Endothelial cell of umbilical vein (primary cell): ENCODE measurements at regions of chr4 and their contacts with region 1.

Region 1: GRCh38 chr4:158850800-158851644 is 82.2 kb downstream of the FNIP2 start:
- DNase-seq: peak; percentile 66
- H3K4me3 ChIP-seq: no peak overlapping the region
- H3K27ac ChIP-seq: no peak overlapping the region
- H3K4me1 ChIP-seq: no peaks in the 10 kb centered on the region
- H3K27me3 ChIP-seq: no peaks in the 10 kb centered on the region
- CTCF ChIP-seq: peak; percentile 27 to 31
- POLR2A ChIP-seq: no peak

Region 2: GRCh38 chr4:158710814-158711213 is 140.2 kb before region 1 on chr4:
- CTCF ChIA-PET with region 1: interaction called, 18 read pairs
- POLR2A ChIA-PET with region 1: no interaction called
- dilution Hi-C with region 1: no loop called
- intact Hi-C with region 1: no loop called
- DNase-seq: peak; percentile 31
- H3K4me3 ChIP-seq: no peak overlapping the region
- H3K27ac ChIP-seq: no peak overlapping the region
- H3K4me1 ChIP-seq: no peaks in the 10 kb centered on the region
- H3K27me3 ChIP-seq: no peaks in the 10 kb centered on the region
- CTCF ChIP-seq: peak; percentile 12 to 17
- POLR2A ChIP-seq: no peak

Region 3: DNA sequence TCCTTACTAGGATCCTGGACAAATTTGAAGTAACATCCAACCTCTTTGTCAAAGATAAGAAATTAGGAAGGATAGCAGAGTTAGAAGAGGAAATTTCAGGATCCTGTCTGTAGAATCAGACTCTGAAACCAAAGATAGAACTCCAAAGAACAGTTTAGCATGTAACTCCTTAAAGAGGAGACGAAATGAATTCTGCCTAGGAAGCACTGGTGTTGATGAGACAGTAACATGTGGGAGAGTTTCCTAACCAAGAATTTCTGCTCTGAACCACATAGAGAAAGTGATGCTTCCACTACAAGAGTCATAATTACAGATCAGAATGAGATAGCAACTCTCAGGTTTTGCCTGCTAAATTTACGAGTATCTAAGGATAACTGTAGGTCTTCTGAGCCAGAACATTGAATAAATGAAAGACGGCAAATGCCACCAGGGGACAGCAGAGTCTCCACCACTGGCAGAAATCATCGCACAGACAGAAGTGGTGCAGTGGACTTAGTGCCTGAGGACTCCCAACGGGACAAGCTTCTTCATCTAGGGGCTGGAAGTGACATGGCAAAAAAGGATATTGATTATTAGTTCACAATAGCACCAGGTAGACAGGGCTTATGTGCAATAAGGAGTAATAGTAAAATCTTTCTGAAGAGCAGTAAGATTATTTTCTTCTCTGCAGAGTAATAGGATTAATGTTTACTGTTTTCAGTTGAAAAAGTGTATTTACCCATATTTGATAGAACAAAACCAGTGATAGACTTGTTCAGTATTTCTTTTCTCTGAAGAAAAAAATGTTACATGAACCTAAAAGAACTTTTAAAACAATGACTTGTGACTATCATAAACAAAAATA is 121.1 kb before region 1 on chr4:
- CTCF ChIA-PET with region 1: interaction called, 50 read pairs
- POLR2A ChIA-PET with region 1: no interaction called
- dilution Hi-C with region 1: no loop called
- intact Hi-C with region 1: loop called (anchors 1 kb)
- DNase-seq: peak; percentile 84
- H3K4me3 ChIP-seq: no peak overlapping the region
- H3K27ac ChIP-seq: no peak overlapping the region
- H3K4me1 ChIP-seq: no peaks in the 10 kb centered on the region
- H3K27me3 ChIP-seq: peaks cover 9 to 14% of the 10 kb centered on the region in 2 experiments
- CTCF ChIP-seq: peak; percentile 71 to 78
- POLR2A ChIP-seq: no peak

Region 4: GRCh38 chr4:158782551-158783360 is 68.3 kb before region 1 on chr4:
- CTCF ChIA-PET with region 1: interaction called, 11 read pairs
- POLR2A ChIA-PET with region 1: no interaction called
- dilution Hi-C with region 1: no loop called
- intact Hi-C with region 1: no loop called
- DNase-seq: peak; percentile 54
- H3K4me3 ChIP-seq: no peak overlapping the region
- H3K27ac ChIP-seq: peak overlapping the region; percentile 51
- H3K4me1 ChIP-seq: peaks cover 39% of the 10 kb centered on the region
- H3K27me3 ChIP-seq: no peaks in the 10 kb centered on the region
- CTCF ChIP-seq: no peak
- POLR2A ChIP-seq: no peak

Region 5: DNA sequence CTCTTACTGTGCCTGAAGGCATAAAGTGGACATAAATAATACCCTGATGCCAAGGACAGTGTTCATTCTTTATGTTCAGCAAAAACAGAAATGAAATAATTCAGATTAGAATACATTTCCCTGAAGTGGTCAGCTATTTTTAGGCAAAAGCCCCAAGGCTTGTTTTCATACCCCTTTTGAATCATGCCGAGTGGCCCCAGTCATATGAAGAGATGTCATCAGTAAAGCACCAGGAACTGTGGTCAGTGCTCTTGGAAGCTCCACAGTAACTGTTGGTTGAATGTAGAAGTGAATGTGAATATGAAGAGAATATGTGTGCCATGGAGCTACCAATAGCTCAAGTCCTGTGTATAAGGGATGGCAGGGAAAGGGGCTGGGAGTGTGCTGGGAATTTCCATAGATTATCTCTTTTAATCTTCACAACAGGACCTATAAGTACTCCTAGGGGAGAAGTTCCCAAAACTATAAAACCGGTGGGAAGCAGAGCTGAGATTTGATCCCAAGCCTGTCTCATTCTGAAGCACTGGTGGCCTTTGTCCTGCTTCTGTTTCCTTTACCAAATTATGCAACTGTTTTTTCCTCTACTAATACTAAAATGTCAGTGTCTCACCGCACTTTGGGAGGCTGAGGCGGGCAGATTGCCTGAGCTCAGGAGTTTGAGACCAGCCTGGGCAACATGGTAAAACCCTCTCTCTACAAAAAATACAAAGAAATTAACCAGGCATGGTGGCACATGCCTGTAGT is 29.6 kb before region 1 on chr4:
- CTCF ChIA-PET with region 1: interaction called, 20 read pairs
- POLR2A ChIA-PET with region 1: no interaction called
- dilution Hi-C with region 1: no loop called
- intact Hi-C with region 1: no loop called
- DNase-seq: no peak
- H3K4me3 ChIP-seq: no peak overlapping the region
- H3K27ac ChIP-seq: no peak overlapping the region
- H3K4me1 ChIP-seq: peaks cover 45% of the 10 kb centered on the region
- H3K27me3 ChIP-seq: no peaks in the 10 kb centered on the region
- CTCF ChIP-seq: no peak
- POLR2A ChIP-seq: no peak